Activated CD4-positive, alpha-beta T cell treated with anti-CD3 and anti-CD28 coated beads for 36 hours (primary cell): ENCODE measurements at regions of chr3 and their contacts with region 1.

Region 1: GRCh38 chr3:102089904-102090492 is 240.7 kb downstream of the NFKBIZ start:
- DNase-seq: no peak
- ATAC-seq: no peak
- H3K4me3 Mint-ChIP-seq: no peak overlapping the region
- H3K27ac Mint-ChIP-seq: no peak overlapping the region
- H3K4me1 Mint-ChIP-seq: peaks cover 45% of the 10 kb centered on the region
- H3K27me3 Mint-ChIP-seq: peaks cover 5% of the 10 kb centered on the region

Region 2: GRCh38 chr3:101809178-101810021 is 280.6 kb before region 1 on chr3:
- CTCF ChIA-PET with region 1: interaction called, 6 read pairs
- POLR2A ChIA-PET with region 1: no interaction called
- intact Hi-C with region 1: loop called (anchors 5 kb)
- DNase-seq: peak; percentile 45
- ATAC-seq: peak; percentile 53
- H3K4me3 Mint-ChIP-seq: no peak overlapping the region
- H3K27ac Mint-ChIP-seq: peak overlapping the region; percentile 53
- H3K4me1 Mint-ChIP-seq: peaks cover 48% of the 10 kb centered on the region
- H3K27me3 Mint-ChIP-seq: no peaks in the 10 kb centered on the region

Region 3: GRCh38 chr3:101936419-101937356 is 153.3 kb before region 1 on chr3:
- CTCF ChIA-PET with region 1: no interaction called
- POLR2A ChIA-PET with region 1: no interaction called
- intact Hi-C with region 1: loop called (anchors 1 kb)
- DNase-seq: peak; percentile 42
- ATAC-seq: peak; percentile 88
- H3K4me3 Mint-ChIP-seq: no peak overlapping the region
- H3K27ac Mint-ChIP-seq: peak overlapping the region; percentile 77
- H3K4me1 Mint-ChIP-seq: peaks cover 27% of the 10 kb centered on the region
- H3K27me3 Mint-ChIP-seq: peaks cover 8% of the 10 kb centered on the region

Region 4: GRCh38 chr3:102024270-102024904 is 65.6 kb before region 1 on chr3:
- CTCF ChIA-PET with region 1: interaction called, 3 read pairs
- POLR2A ChIA-PET with region 1: no interaction called
- intact Hi-C with region 1: loop called in 1 of 2 experiments (anchors 2 kb)
- DNase-seq: peak; percentile 52
- ATAC-seq: peak; percentile 96
- H3K4me3 Mint-ChIP-seq: no peak overlapping the region
- H3K27ac Mint-ChIP-seq: no peak overlapping the region
- H3K4me1 Mint-ChIP-seq: peaks cover 17% of the 10 kb centered on the region
- H3K27me3 Mint-ChIP-seq: no peaks in the 10 kb centered on the region

Region 5: DNA sequence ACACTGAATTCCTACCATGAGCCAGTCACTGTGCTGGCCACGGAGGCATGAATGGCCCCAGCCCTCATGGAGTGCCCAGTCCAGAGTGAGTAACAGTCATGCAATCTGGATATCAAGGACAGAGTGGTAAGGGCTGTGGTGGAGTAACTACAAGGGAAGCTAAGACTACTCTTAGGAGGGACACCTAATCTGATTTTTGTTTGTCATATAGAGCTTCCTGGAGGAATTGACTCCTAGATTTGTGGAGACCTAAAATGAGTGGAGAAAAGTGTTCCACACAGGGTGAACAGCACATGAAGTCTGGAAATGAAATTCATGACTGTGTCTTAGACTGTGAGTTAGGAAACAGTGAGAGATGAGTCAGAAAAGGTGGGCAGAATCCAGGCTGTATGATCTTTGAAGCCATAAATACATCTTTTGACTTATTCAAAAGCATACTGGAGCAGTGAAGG is 20.8 kb before region 1 on chr3:
- CTCF ChIA-PET with region 1: no interaction called
- POLR2A ChIA-PET with region 1: no interaction called
- intact Hi-C with region 1: loop called in 1 of 2 experiments (anchors 2 kb)
- DNase-seq: no peak
- ATAC-seq: peak; percentile 95
- H3K4me3 Mint-ChIP-seq: no peak overlapping the region
- H3K27ac Mint-ChIP-seq: no peak overlapping the region
- H3K4me1 Mint-ChIP-seq: peaks cover 23% of the 10 kb centered on the region
- H3K27me3 Mint-ChIP-seq: no peaks in the 10 kb centered on the region

Region 6: GRCh38 chr3:102163036-102163827 is 73.2 kb after region 1 on chr3:
- CTCF ChIA-PET with region 1: interaction called, 4 read pairs
- POLR2A ChIA-PET with region 1: no interaction called
- intact Hi-C with region 1: loop called (anchors 1 kb)
- DNase-seq: no peak
- ATAC-seq: peak; percentile 22
- H3K4me3 Mint-ChIP-seq: no peak overlapping the region
- H3K27ac Mint-ChIP-seq: peak overlapping the region; percentile 15
- H3K4me1 Mint-ChIP-seq: peaks cover 23% of the 10 kb centered on the region
- H3K27me3 Mint-ChIP-seq: no peaks in the 10 kb centered on the region